ENCODE measurements at regions of chr7 and their contacts with region 1.

Region 1: DNA sequence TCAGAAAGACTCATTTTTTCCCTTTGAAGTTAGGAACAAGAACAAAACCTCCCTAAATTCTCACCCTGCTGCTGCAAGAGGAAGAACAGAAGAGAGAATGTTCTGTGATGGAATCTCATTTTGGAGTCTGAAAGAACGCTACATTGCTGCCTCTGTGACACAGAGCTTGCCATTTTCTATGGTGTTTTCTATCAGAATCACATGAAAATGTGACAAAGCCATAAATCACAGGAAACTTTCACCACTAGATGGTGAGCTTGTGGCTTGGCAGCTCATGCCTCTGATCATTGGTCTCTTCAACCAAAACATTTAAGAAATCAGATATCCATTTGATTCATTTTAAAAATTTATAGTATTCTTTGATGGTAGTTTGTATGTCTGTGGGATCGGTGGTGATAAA is 82.9 kb downstream of the CADPS2 start:
- DNase-seq: peak; percentile 20
- H3K4me3 ChIP-seq: no peak overlapping the region
- H3K27ac ChIP-seq: no peak overlapping the region
- H3K4me1 ChIP-seq: no peaks in the 10 kb centered on the region
- H3K27me3 ChIP-seq: no peaks in the 10 kb centered on the region
- CTCF ChIP-seq: peak; percentile 32 to 50

Region 2: DNA sequence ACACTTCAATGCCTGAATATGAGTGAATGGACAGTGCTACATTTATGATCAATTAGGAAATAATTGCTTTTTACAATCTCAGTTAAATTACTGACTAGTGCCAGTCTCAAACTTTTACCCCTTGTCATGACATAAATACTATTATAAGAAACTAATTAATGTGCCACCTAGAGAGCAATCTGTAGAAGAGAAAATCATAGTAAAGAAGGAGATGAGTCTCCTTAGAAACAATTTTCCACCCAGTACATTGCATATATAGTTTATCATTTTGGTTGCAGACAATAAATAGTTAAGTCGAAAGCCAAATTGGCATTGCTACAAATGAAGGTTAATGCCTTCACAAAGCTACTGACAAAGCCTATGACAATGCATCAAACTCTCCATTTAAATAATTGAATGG is 327.8 kb after region 1 on chr7:
- CTCF ChIA-PET with region 1: no interaction called
- dilution Hi-C with region 1: no loop called
- in situ Hi-C with region 1: no loop called
- intact Hi-C with region 1: loop called (anchors 5 kb)
- DNase-seq: no peak
- H3K4me3 ChIP-seq: no peak overlapping the region
- H3K27ac ChIP-seq: no peak overlapping the region
- H3K4me1 ChIP-seq: no peaks in the 10 kb centered on the region
- H3K27me3 ChIP-seq: no peaks in the 10 kb centered on the region
- CTCF ChIP-seq: peak in 1 of 2 donors; percentile 10

Measured in mammary epithelial cell (primary cell).